HAP-1 (cell line): ENCODE measurements at regions of chr20 and their contacts with region 1.

Region 1: GRCh38 chr20:60935971-60936370 is 316.1 kb upstream of the CDH4 start:
- DNase-seq: no peak
- H3K4me3 ChIP-seq: no peak overlapping the region
- H3K4me1 ChIP-seq: no peaks in the 10 kb centered on the region
- H3K27me3 ChIP-seq: no peaks in the 10 kb centered on the region

Region 2: GRCh38 chr20:60837173-60837770 is 98.7 kb before region 1 on chr20:
- in situ Hi-C with region 1: loop called (anchors 25 kb)
- DNase-seq: no peak
- H3K4me3 ChIP-seq: no peak overlapping the region
- H3K4me1 ChIP-seq: no peaks in the 10 kb centered on the region
- H3K27me3 ChIP-seq: no peaks in the 10 kb centered on the region